AG04449 (cell line): ENCODE measurements at regions of chr3 and their contacts with region 1.

Region 1: DNA sequence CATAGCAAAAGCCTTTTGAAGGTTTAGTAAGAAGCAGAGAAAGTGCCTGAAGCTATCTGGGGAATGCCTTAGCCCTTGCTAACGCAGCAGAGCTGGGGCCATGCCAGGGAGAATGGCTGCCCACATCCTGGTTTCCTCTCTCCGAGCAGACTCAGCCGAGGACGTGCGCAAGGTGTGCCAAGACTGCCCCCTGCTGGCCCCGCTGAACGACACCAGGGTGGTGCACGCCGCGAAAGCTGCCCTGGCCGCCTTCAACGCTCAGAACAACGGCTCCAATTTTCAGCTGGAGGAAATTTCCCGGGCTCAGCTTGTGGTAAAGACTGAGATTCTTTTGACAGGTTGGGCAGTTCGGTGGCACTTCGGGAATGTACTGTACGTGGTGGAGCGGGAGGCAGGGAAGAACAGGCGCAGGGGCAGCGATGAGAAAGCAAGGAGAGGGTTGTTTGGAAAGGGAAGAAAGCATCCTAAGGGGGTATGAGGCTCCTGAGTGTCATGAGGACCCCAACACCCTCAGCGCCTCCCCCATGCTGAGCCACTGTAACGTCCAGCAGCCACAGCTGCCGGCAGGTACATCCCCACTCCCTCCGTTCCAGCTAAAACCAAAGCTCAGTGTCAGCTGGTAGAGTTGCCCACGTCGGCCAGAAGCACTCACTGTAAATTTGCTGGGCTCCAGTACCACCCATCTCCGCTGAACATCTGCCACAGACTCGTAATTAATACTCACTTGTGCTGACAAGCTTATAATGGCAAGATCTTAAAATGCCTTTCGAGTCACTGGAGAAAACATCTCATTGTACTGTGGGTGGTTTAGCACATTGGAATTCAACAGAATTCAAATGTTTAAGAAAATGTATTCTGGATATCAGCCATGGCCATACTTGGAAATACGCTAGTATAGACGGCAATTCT is 4.4 kb downstream of the AHSG start:
- DNase-seq: peak; percentile 93
- H3K4me3 ChIP-seq: peak overlapping the region; percentile 44
- CTCF ChIP-seq: peak; percentile 99

Region 2: GRCh38 chr3:185976977-185977678 is 640.2 kb before region 1 on chr3:
- CTCF ChIA-PET with region 1: interaction called, 26 read pairs
- POLR2A ChIA-PET with region 1: no interaction called
- DNase-seq: no peak
- H3K4me3 ChIP-seq: no peak overlapping the region
- CTCF ChIP-seq: peak; percentile 96

Region 3: GRCh38 chr3:186277268-186277909 is 339.9 kb before region 1 on chr3:
- CTCF ChIA-PET with region 1: no interaction called
- POLR2A ChIA-PET with region 1: no interaction called
- DNase-seq: no peak
- H3K4me3 ChIP-seq: no peak overlapping the region
- CTCF ChIP-seq: peak; percentile 58

Region 4: GRCh38 chr3:186570096-186570940 is 47.0 kb before region 1 on chr3 and contains the start of gene DNAJB11:
- CTCF ChIA-PET with region 1: interaction called, 60 read pairs
- POLR2A ChIA-PET with region 1: no interaction called
- DNase-seq: peak; percentile 99
- H3K4me3 ChIP-seq: peak within 1 kb of the TSS; percentile 93
- CTCF ChIP-seq: no peak

Region 5: GRCh38 chr3:186640473-186640818 is 23.2 kb after region 1 on chr3:
- CTCF ChIA-PET with region 1: interaction called, 65 read pairs
- POLR2A ChIA-PET with region 1: no interaction called
- DNase-seq: no peak
- H3K4me3 ChIP-seq: no peak overlapping the region
- CTCF ChIP-seq: no peak

Region 6: GRCh38 chr3:186790261-186790981 is 173.1 kb after region 1 on chr3:
- CTCF ChIA-PET with region 1: interaction called, 49 read pairs
- POLR2A ChIA-PET with region 1: interaction called, 4 read pairs
- DNase-seq: no peak
- H3K4me3 ChIP-seq: no peak overlapping the region
- CTCF ChIP-seq: no peak

Region 7: DNA sequence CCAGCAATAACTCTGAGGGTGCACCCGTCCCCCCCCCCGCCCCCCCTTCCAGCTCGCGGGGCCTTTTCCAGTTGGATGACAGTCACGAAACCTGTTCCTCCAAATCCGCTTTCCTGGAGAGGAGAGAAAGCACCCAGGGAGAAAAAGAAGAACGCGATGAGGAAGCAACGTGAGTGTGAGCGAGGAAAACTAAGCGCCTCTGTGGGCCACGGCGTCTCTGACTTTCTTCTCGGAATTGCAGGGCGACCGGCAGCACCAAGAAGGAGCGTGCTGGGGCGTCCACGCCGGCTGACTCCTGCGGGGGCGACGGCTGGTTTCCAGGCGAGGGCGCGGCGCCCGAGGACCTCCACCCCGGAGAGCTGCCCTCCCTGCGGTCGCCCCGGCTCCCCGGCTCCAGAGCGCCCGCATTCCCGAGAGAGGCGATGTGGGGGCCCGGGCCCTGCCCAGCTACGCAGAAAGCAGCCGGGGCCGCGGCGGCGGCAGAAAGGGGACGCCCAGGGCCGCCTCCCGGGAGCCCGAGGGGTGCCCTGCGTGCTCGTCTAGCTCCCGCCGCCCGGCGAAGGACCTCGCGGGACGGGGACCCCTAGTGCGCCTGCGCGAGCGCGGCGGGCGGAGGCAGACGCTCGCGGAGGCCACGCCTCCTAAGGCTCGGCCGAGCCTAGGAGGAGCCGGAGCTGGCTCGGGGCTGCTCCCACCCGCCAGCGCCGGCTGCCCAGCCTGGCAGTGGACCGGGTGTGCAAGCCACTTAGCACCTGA is 209.9 kb after region 1 on chr3:
- CTCF ChIA-PET with region 1: interaction called, 140 read pairs
- POLR2A ChIA-PET with region 1: interaction called, 11 read pairs
- DNase-seq: no peak
- H3K4me3 ChIP-seq: peak overlapping the region; percentile 64
- CTCF ChIP-seq: no peak